Activated CD4-positive, alpha-beta memory T cell treated with anti-CD3 and anti-CD28 coated beads, Interleukin-2, amount 10 ng/mL, durations not matched to agents 7 days and 5 days (primary cell): ENCODE measurements at regions of chr6 and their contacts with region 1.

Region 1: GRCh38 chr6:125956506-125957390 is at the start of gene HINT3:
- DNase-seq: peak; percentile 97
- H3K4me3 Mint-ChIP-seq: no peak within 1 kb of the TSS
- H3K27ac Mint-ChIP-seq: peak within 1 kb of the TSS; percentile 44
- H3K4me1 Mint-ChIP-seq: peaks cover 8% of the 10 kb centered on the region
- H3K27me3 Mint-ChIP-seq: no peaks in the 10 kb centered on the region
- total RNA-seq, gene HINT3: 11.0 to 11.7 TPM

Region 2: DNA sequence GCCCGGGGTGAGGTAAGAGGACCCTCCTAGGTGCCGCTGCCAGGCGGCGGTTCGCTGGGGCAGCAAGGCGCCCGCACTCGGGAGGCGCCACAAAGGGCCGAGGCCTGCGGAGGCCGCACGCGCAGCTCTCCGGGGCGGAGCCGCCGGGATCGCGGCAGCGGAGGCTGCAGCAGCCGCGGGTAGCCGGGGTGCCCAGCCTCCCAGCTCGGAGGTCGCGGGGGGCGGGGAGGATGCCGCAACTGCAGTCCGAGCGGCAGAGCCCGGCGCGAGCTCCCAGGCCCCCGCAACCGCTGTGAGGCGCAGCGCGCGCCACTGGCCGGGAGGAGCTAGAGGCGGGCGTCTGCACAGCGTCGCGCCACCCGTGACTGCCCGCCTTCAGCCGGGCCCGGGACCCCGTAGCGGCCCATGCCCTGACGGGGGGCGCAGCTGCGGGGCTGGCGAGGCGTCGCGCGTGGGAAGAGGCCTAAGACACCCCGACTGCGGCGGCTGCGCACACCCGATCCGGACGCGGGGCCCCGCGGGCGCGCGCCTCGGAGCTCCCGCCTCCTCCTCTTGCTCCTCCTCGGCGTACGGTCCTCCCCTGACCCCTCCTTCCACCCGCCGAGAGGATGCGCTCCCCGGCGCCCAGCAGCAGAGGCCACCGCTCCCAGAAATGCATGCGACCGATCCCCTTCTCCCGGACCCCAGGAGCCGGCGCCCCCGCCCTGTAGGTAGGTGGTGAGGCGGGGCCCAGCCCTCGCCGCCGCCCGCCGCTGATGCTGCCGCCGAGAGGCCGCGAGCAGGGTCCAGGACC is 166.2 kb before region 1 on chr6 and contains the start of gene NCOA7:
- CTCF ChIA-PET with region 1: interaction called, 231 read pairs
- POLR2A ChIA-PET with region 1: interaction called, 111 read pairs
- DNase-seq: peak; percentile 83
- H3K4me3 Mint-ChIP-seq: peak within 1 kb of the TSS; percentile 90
- H3K27ac Mint-ChIP-seq: peak within 1 kb of the TSS; percentile 96
- H3K4me1 Mint-ChIP-seq: peaks cover 55% of the 10 kb centered on the region
- H3K27me3 Mint-ChIP-seq: no peaks in the 10 kb centered on the region
- total RNA-seq, gene NCOA7: 45.2 to 49.9 TPM

Region 3: DNA sequence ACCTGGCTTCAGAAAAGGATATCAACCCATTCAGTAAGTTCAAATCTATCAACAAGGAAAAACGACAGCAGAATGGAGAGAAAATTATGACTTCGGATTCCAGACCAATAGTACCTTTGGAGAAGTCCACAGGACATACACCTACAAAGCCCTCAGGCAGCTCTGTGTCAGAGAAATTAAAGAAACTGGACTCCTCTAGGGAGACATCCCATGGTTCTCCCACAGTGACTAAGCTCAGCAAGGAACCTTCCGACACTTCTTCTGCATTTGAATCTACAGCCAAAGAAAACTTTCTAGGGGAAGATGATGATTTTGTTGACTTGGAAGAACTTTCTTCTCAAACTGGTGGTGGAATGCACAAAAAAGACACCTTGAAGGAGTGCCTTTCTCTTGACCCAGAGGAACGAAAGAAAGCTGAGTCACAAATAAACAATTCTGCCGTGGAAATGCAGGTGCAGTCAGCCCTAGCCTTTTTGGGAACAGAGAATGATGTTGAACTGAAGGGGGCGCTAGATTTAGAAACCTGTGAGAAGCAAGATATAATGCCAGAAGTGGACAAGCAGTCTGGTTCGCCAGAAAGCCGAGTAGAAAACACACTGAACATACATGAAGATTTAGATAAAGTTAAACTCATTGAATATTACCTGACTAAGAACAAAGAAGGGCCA is 67.6 kb before region 1 on chr6:
- CTCF ChIA-PET with region 1: interaction called, 19 read pairs
- POLR2A ChIA-PET with region 1: interaction called, 4 read pairs
- DNase-seq: no peak
- H3K4me3 Mint-ChIP-seq: no peak overlapping the region
- H3K27ac Mint-ChIP-seq: no peak overlapping the region
- H3K4me1 Mint-ChIP-seq: no peaks in the 10 kb centered on the region
- H3K27me3 Mint-ChIP-seq: no peaks in the 10 kb centered on the region

Region 4: DNA sequence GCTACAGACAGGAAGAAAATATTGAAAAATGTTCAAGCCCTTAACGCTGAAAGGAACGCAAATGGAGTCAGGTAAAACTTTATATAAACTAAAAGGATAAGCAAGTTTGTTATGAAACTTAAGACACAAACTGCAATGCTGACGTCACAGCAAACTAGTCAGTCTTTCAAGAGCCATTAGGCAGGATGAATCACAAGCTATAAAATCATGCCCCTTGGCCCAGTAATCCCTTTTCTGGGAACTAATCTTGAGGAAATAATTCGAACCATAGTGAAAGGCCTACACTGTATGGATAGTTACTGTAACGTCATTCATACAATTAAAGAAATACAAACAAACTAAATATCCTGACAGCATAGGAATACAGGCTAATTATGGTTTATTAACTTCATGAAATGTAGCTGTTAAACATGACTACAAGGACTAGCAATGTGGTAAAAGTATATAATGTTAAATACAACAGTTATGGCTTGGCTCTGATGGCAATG is 42.8 kb before region 1 on chr6:
- CTCF ChIA-PET with region 1: interaction called, 36 read pairs
- POLR2A ChIA-PET with region 1: interaction called, 26 read pairs
- DNase-seq: no peak
- H3K4me3 Mint-ChIP-seq: no peak overlapping the region
- H3K27ac Mint-ChIP-seq: no peak overlapping the region
- H3K4me1 Mint-ChIP-seq: peaks cover 30% of the 10 kb centered on the region
- H3K27me3 Mint-ChIP-seq: no peaks in the 10 kb centered on the region

Region 5: GRCh38 chr6:125939026-125939425 is 17.7 kb before region 1 on chr6:
- CTCF ChIA-PET with region 1: interaction called, 11 read pairs
- POLR2A ChIA-PET with region 1: interaction called, 4 read pairs
- DNase-seq: no peak
- H3K4me3 Mint-ChIP-seq: no peak overlapping the region
- H3K27ac Mint-ChIP-seq: no peak overlapping the region
- H3K4me1 Mint-ChIP-seq: peaks cover 28% of the 10 kb centered on the region
- H3K27me3 Mint-ChIP-seq: no peaks in the 10 kb centered on the region

Region 6: DNA sequence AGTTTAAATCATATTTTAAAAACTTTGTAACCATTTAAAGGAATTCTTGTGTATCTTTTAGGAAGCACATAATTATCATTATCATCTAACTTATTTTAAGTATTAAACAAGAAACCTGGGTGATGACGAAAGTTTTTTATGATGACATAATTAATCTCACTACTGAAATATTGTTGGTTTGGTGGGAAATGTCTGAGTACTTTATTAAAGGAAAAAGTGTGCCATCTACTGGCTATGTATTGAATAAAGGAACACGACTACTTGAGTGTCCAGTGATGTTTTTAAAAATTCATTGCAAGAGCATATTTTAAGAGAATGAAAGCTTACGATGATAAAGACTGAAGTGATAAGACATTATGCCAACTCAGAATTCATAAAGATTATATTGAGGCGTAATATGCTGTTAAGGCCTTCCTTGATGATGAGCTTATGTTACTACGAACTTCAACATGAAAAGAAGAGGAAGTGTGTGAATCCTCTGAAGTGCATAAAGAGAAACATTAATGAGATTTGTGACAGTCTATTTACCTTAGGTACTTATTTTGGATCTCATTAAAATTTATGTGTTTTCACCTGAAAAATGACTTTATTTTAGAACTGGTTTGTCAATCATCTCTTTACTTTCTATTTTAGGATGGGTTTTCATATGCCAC is 17.6 kb after region 1 on chr6:
- CTCF ChIA-PET with region 1: interaction called, 41 read pairs
- POLR2A ChIA-PET with region 1: interaction called, 7 read pairs
- DNase-seq: no peak
- H3K4me3 Mint-ChIP-seq: no peak overlapping the region
- H3K27ac Mint-ChIP-seq: no peak overlapping the region
- H3K4me1 Mint-ChIP-seq: peaks cover 5% of the 10 kb centered on the region
- H3K27me3 Mint-ChIP-seq: no peaks in the 10 kb centered on the region